ENCODE measurements at regions of chr7 and their contacts with region 1.

Region 1: DNA sequence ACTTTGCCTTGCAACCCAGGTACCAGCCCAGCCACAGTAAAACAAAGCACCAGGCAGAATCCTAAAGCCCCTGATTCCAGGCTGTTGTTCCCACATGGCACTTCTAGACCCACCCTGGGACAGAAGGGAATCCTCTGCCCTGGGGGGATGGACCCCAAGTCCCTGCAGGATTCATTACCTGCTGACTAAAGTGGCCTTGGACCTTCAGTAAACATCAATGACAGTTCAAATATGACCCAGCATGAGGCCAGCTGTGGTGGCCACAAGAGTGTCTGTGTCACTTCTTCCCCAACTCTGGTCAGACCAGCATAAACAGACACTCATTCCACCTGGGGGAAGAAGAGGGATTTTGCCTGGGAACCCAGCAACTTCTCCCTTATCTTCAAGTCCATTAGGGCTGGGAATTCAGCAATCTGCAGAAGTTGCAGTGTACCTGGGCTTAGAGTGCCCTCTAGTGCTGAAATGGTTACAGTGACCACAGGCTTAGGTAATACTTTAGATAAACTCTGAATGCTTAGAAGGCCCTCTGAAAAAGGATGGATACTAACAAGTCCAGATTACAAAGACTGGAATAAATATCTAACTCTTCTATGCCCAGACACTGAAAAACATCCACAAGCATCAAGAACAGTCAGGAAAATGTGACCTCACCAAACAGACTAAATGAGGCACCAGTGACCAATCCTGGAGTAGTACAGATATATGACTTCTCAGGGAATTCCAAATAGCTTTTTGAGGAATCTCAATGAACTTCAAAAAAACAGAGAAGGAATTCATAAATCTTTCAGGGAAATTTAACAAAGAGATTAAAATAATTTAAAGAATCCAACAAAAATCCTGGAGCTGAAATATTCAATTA is 108.5 kb upstream of the TMEM168 start:
- DNase-seq: peak; percentile 81
- H3K4me3 ChIP-seq: no peak overlapping the region
- H3K27ac ChIP-seq: no peak overlapping the region
- H3K4me1 ChIP-seq: no peaks in the 10 kb centered on the region
- H3K27me3 ChIP-seq: no peaks in the 10 kb centered on the region
- CTCF ChIP-seq: peak; percentile 83

Region 2: GRCh38 chr7:111741811-111742240 is 1156.8 kb before region 1 on chr7:
- CTCF ChIA-PET with region 1: no interaction called
- POLR2A ChIA-PET with region 1: no interaction called
- intact Hi-C with region 1: loop called (anchors 10 kb)
- DNase-seq: peak; percentile 71
- H3K4me3 ChIP-seq: no peak overlapping the region
- H3K27ac ChIP-seq: no peak overlapping the region
- H3K4me1 ChIP-seq: no peaks in the 10 kb centered on the region
- H3K27me3 ChIP-seq: no peaks in the 10 kb centered on the region
- CTCF ChIP-seq: peak; percentile 81

Region 3: DNA sequence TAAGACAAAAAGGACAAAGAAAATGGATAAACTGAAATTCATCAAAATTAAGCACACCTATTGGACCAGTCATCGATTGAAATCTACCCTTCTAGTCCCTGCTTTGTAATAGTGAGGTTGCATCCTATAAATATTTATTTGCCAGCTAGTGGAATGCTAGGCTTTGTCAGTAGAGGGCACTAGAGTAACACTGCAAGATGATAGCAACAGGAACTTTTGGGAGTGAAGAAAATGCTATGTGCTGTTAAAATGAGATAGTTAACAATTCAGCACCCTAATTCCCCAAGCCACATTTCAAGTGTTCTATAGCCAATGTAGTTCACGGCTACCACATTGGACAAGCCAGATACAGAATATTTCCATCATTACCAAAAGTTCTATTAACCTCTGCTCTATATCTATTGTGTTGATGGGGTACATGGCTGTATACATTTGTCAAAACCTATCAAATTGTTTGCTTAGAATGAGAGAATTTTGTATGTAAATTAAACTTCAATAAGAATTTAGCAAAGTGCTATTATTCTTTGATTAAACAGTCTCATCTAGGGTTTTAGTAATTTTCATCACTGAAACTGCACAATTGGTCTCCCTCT is 348.1 kb before region 1 on chr7:
- CTCF ChIA-PET with region 1: no interaction called
- POLR2A ChIA-PET with region 1: no interaction called
- intact Hi-C with region 1: loop called (anchors 1 kb)
- DNase-seq: peak; percentile 76
- H3K4me3 ChIP-seq: no peak overlapping the region
- H3K27ac ChIP-seq: no peak overlapping the region
- H3K4me1 ChIP-seq: no peaks in the 10 kb centered on the region
- H3K27me3 ChIP-seq: peaks cover 14% of the 10 kb centered on the region
- CTCF ChIP-seq: peak; percentile 94

Region 4: DNA sequence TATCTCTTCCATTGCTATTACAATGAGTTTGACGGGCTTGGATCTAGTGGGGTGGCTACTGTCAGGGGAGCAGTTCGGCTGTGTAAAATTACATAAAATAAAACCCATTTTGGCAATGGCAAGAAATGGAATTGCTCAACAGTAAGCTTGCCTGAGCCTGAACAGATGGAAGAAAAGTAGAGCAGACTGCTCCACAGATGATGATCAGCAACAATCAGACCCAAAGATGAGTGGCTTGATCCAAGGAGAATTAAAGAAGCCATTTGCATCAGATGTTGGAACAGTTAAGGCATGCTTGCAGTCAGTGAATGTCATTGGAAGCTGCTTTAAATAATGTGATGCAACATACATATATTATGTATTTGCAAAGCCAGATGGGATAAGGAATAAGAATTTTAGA is 476.3 kb after region 1 on chr7:
- CTCF ChIA-PET with region 1: no interaction called
- POLR2A ChIA-PET with region 1: no interaction called
- intact Hi-C with region 1: no loop called
- DNase-seq: no peak
- H3K4me3 ChIP-seq: no peak overlapping the region
- H3K27ac ChIP-seq: no peak overlapping the region
- H3K4me1 ChIP-seq: no peaks in the 10 kb centered on the region
- H3K27me3 ChIP-seq: no peaks in the 10 kb centered on the region
- CTCF ChIP-seq: no peak

Measured in A673 (cell line).